Calu3 (cell line): ENCODE measurements at regions of chr14 and their contacts with region 1.

Region 1: DNA sequence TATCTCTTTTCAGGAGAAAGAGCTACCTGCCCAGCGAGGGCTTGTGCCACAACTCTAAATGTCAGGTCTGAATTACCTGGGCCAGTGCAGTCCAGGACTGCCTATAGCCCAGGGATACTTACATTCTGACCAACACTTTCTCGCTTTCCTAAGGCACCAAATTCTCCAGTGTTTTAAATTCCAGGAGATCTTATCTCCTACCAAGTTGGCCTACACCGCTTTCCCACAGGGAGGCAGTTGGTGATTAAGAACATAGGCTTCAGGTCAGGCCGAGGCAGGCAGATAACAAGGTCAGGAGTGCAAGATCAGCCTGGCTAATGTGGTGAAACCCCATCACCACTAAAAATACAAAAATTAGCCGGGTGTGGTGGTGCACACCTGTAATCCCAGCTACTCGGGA is 41.1 kb downstream of the RPS29 start:
- DNase-seq: no peak
- H3K4me3 Mint-ChIP-seq: no peak overlapping the region
- H3K27ac Mint-ChIP-seq: no peak overlapping the region
- H3K4me1 Mint-ChIP-seq: no peaks in the 10 kb centered on the region
- H3K27me3 Mint-ChIP-seq: peaks cover 13% of the 10 kb centered on the region
- CTCF ChIP-seq: no peak

Region 2: DNA sequence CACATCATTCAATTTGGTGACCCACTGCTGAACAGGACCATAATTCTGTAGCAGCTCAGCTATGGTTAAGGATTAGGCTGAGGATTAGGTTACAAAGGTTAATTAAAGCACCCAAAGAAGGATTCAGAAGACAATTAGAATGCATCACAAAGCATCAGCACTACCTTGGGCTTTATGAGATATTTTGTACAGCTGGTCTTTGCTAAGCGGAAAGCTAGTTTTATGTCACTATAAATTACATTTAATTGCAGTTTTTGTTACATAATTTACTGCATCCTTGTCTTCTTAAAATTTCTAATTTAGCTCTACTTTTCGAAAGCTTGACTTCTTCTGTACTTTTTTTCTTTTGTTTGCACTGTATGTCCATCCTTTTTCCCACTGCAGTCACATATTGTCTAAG is 670.4 kb before region 1 on chr14:
- CTCF ChIA-PET with region 1: interaction called, 12 read pairs
- intact Hi-C with region 1: no loop called
- DNase-seq: no peak
- H3K4me3 Mint-ChIP-seq: no peak overlapping the region
- H3K27ac Mint-ChIP-seq: no peak overlapping the region
- H3K4me1 Mint-ChIP-seq: no peaks in the 10 kb centered on the region
- H3K27me3 Mint-ChIP-seq: no peaks in the 10 kb centered on the region
- CTCF ChIP-seq: no peak

Region 3: GRCh38 chr14:49703965-49704364 is 158.9 kb after region 1 on chr14:
- CTCF ChIA-PET with region 1: no interaction called
- intact Hi-C with region 1: no loop called
- DNase-seq: no peak
- H3K4me3 Mint-ChIP-seq: no peak overlapping the region
- H3K27ac Mint-ChIP-seq: no peak overlapping the region
- H3K4me1 Mint-ChIP-seq: no peaks in the 10 kb centered on the region
- H3K27me3 Mint-ChIP-seq: no peaks in the 10 kb centered on the region
- CTCF ChIP-seq: no peak